BJ (cell line): ENCODE measurements at regions of chr16 and their contacts with region 1.

Region 1: GRCh38 chr16:89842471-89843408 is 14.5 kb downstream of the SPIRE2 start:
- DNase-seq: peak; percentile 39
- H3K4me3 ChIP-seq: no peak overlapping the region
- H3K27me3 ChIP-seq: no peaks in the 10 kb centered on the region
- CTCF ChIP-seq: no peak

Region 2: DNA sequence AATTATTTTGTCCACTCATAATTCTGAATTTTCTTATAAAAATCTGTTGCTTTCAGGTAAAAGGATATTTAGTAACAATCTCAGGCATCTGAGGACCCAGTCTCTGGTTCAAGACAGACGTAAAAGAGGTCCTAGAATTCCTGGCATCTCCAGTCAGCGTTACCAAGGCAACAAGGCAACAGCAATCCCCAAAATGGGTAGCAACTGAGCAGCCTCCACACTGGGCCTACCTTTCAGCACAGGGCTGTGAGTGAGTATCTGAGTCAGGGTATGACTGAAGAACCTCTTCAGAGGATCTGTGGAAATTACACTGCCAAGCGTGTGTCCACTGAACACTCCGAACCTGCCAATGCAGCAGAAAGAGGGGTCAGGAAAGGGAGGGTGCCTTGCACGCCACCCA is 47.1 kb before region 1 on chr16:
- CTCF ChIA-PET with region 1: no interaction called
- POLR2A ChIA-PET with region 1: no interaction called
- DNase-seq: no peak
- H3K4me3 ChIP-seq: no peak overlapping the region
- H3K27me3 ChIP-seq: no peaks in the 10 kb centered on the region
- CTCF ChIP-seq: no peak

Region 3: GRCh38 chr16:89815639-89816348 is 26.9 kb before region 1 on chr16:
- CTCF ChIA-PET with region 1: no interaction called
- POLR2A ChIA-PET with region 1: interaction called, 19 read pairs
- DNase-seq: no peak
- H3K4me3 ChIP-seq: peak overlapping the region; percentile 81
- H3K27me3 ChIP-seq: no peaks in the 10 kb centered on the region
- CTCF ChIP-seq: no peak

Region 4: DNA sequence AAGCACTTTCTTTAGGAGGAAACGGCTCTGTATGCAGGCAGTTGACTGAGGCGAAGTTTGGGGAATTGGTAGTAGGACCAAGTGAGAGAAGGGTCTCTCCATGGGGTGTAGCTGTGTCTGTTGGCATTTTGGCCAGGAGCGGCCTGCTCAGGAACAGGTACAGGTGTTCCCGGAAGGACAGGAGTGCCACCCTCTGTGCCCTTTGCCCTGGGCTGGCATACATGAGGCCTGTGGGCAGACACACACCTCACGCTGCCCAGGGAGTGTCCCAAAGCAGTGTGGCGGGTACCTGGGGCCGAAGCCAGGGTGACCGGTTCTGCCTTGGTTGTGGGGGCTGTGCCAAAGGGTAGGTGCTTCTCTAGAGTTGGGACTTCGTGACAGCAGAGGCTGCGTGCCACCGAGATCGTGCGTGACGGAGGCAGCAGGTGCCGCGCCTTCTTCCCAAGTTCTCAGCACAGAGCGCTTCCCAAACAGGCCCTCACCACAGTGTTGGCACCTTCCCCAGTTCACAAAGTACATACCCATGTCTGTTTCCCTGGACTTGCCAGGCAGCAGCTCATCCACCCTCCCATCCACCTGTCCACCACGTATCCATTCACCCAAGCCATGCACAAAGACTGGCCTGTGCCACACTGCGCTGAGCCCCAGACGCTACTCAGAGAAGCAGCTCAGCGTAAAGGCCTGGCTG is 10.7 kb after region 1 on chr16:
- CTCF ChIA-PET with region 1: no interaction called
- POLR2A ChIA-PET with region 1: no interaction called
- DNase-seq: no peak
- H3K4me3 ChIP-seq: no peak overlapping the region
- H3K27me3 ChIP-seq: no peaks in the 10 kb centered on the region
- CTCF ChIP-seq: no peak